PC-9 (cell line): ENCODE measurements at regions of chr7 and their contacts with region 1.

Region 1: DNA sequence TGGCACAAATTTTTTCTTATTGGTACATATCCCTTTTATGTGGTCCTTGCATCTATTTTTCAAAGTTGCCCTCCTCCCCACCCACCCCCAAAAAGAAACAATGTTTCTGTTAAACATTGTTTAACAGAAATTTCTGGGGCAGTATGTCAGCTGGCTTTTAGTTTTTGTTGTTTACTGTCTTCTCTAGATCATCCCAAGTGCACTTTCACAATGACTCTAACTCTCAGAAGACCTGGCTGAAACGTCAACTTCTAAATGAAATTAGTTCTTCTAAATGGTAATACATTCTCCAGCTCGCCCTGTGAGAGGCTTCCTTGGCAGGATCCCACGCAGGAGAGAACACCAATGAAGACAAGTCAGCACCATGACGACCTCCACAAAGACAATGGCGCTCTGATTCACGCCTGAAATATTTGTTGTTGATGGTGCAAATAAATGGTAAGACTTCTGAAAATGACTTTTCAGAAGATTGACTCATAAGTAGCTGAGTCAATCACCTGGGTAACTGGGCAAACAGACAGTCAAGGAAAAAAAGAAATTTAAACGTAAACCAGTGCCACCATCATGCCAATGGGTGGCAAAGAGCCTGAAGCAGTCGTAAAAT is 293.7 kb downstream of the FZD1 start:
- DNase-seq: peak; percentile 83 to 86
- H3K4me3 ChIP-seq: no peak overlapping the region
- H3K27ac ChIP-seq: peak overlapping the region; percentile 54
- H3K4me1 ChIP-seq: peaks cover 13% of the 10 kb centered on the region
- H3K27me3 ChIP-seq: no peaks in the 10 kb centered on the region
- CTCF ChIP-seq: no peak

Region 2: GRCh38 chr7:91068136-91069126 is 489.5 kb before region 1 on chr7:
- CTCF ChIA-PET with region 1: no interaction called
- POLR2A ChIA-PET with region 1: interaction called, 10 read pairs
- intact Hi-C with region 1: no loop called
- DNase-seq: peak in 1 of 2 experiments; percentile 14
- H3K4me3 ChIP-seq: no peak overlapping the region
- H3K27ac ChIP-seq: no peak overlapping the region
- H3K4me1 ChIP-seq: no peaks in the 10 kb centered on the region
- H3K27me3 ChIP-seq: no peaks in the 10 kb centered on the region
- CTCF ChIP-seq: no peak

Region 3: GRCh38 chr7:91264046-91264923 is 293.6 kb before region 1 on chr7 and contains the start of gene FZD1:
- CTCF ChIA-PET with region 1: no interaction called
- POLR2A ChIA-PET with region 1: interaction called, 9 read pairs
- intact Hi-C with region 1: loop called (anchors 1 kb)
- DNase-seq: peak; percentile 87 to 98
- H3K4me3 ChIP-seq: peak within 1 kb of the TSS; percentile 60
- H3K27ac ChIP-seq: no peak within 1 kb of the TSS
- H3K4me1 ChIP-seq: 0 out of 2 replicates have a peak, but pooled peaks cover 6% of the 10 kb centered on the region
- H3K27me3 ChIP-seq: peaks cover 17% of the 10 kb centered on the region; the same call in 1 of the 2 replicates
- CTCF ChIP-seq: no peak
- total RNA-seq, gene FZD1: 2.6 and 2.8 TPM in 2 replicates

Region 4: DNA sequence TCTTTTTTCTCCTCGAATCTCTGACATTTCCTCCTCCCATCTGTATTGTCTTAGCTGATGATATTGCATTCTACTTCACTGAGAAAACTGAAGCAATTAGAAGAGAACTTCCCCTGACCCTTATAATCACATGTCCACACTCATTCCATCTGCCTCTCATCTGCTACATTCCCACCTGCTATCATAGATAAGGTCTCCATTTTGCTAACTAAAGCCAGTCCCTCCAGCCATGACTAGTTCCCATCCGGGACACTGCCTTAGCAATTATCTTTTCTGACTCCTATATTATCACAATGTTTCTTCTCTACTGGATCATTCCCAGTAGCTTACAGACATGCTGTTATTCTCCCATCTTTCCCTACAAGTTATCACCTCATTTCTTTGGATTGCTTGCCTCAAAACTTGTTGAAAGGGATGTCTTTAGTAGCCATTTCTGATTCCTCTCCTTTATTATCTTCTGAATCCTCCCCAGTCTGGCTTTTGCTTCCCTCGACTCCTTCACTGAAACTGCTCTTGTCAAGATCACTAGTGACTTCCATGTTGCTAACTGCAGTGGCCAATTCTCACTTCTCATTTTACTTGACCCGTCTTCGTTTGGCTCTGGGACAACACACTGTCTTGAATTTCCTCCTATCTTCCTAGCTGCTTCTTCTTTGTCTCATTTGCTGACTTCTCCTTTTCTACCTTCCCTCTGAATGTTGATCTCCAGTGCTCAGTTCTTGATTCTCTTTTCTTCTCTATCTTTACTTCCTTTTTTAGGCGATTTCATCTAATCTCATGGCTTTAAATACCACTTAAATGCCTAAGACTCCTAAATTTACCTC is 257.7 kb before region 1 on chr7:
- CTCF ChIA-PET with region 1: no interaction called
- POLR2A ChIA-PET with region 1: no interaction called
- intact Hi-C with region 1: no loop called
- DNase-seq: no peak
- H3K4me3 ChIP-seq: no peak overlapping the region
- H3K27ac ChIP-seq: no peak overlapping the region
- H3K4me1 ChIP-seq: no peaks in the 10 kb centered on the region
- H3K27me3 ChIP-seq: no peaks in the 10 kb centered on the region
- CTCF ChIP-seq: no peak

Region 5: DNA sequence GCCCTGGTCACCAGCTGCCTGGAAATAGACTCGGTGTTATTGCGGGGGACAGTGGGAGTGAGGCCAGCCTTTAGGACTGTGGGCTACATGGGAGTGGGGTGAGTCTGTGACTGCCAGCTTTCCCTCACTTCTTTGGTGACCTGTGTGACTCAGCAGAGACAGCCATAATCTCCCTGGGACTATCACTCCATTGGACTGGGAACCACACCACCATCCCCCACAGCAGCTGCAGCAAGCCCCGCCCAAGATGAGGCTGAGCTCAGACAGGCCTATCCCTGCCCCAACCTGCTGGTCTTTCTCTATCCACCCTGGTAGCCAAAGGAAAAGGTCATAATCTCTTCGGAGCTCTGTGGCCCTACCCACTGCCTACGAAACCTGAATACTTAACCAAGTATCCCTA is 30.4 kb before region 1 on chr7:
- CTCF ChIA-PET with region 1: no interaction called
- POLR2A ChIA-PET with region 1: no interaction called
- intact Hi-C with region 1: no loop called
- DNase-seq: no peak
- H3K4me3 ChIP-seq: no peak overlapping the region
- H3K27ac ChIP-seq: no peak overlapping the region
- H3K4me1 ChIP-seq: no peaks in the 10 kb centered on the region
- H3K27me3 ChIP-seq: no peaks in the 10 kb centered on the region
- CTCF ChIP-seq: no peak

Region 6: GRCh38 chr7:91541641-91542040 is 16.2 kb before region 1 on chr7:
- CTCF ChIA-PET with region 1: no interaction called
- POLR2A ChIA-PET with region 1: interaction called, 14 read pairs
- intact Hi-C with region 1: no loop called
- DNase-seq: no peak
- H3K4me3 ChIP-seq: no peak overlapping the region
- H3K27ac ChIP-seq: no peak overlapping the region
- H3K4me1 ChIP-seq: no peaks in the 10 kb centered on the region
- H3K27me3 ChIP-seq: no peaks in the 10 kb centered on the region; the same call in 1 of the 2 replicates
- CTCF ChIP-seq: no peak

Region 7: GRCh38 chr7:91759215-91759871 is 201.5 kb after region 1 on chr7:
- CTCF ChIA-PET with region 1: no interaction called
- POLR2A ChIA-PET with region 1: no interaction called
- intact Hi-C with region 1: loop called (anchors 2 kb)
- DNase-seq: peak; percentile 88 to 92
- H3K4me3 ChIP-seq: no peak overlapping the region
- H3K27ac ChIP-seq: no peak overlapping the region
- H3K4me1 ChIP-seq: peaks cover 13% of the 10 kb centered on the region
- H3K27me3 ChIP-seq: no peaks in the 10 kb centered on the region
- CTCF ChIP-seq: no peak

Region 8: GRCh38 chr7:91852263-91852741 is 294.4 kb after region 1 on chr7:
- CTCF ChIA-PET with region 1: no interaction called
- POLR2A ChIA-PET with region 1: no interaction called
- intact Hi-C with region 1: loop called (anchors 5 kb)
- DNase-seq: peak in 1 of 2 experiments; percentile 41
- H3K4me3 ChIP-seq: no peak overlapping the region
- H3K27ac ChIP-seq: no peak overlapping the region
- H3K4me1 ChIP-seq: peaks cover 13% of the 10 kb centered on the region; the same call in 1 of the 2 replicates
- H3K27me3 ChIP-seq: no peaks in the 10 kb centered on the region
- CTCF ChIP-seq: peak; percentile 51

Region 9: DNA sequence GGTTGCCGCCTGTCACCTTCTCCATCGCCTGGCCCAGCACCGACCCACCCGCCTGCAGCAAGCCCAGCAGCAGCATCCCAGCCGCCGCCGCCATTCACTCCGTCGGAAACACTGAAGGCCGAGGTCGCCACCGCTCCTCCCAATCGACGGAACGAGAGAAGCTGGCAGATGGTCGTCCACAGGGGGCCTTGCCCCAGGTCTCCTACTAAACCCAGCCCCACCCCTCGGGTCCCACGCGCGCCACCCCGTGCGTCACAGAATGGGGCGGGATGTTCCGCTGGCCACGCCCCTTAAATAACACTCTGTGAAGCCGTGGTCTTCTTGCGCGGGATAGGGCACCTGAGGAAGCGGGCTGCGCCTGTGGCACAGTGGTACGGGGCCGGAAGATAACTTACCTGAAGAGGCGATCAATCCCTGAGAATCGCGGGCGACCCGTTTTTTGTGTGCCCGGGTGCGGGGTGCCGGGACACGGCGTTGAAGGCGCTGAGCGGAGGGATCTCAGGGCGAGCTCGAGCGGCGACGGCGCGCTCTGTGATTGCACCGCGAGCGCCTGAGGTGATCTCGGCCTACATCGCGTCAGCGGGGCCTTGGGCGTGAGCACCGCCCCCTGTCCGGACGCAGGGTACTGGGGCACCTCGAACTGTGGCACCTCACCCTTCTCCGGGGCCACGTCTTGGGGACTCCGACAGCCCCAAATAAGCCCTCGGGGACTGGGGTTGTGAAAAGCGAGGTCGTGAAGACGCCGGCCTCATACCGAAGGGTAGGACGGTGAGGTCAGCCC is 576.6 kb after region 1 on chr7 and contains the start of gene CYP51A1:
- CTCF ChIA-PET with region 1: no interaction called
- POLR2A ChIA-PET with region 1: no interaction called
- intact Hi-C with region 1: loop called (anchors 1 kb)
- DNase-seq: peak; percentile 80 to 95
- H3K4me3 ChIP-seq: peak within 1 kb of the TSS; percentile 65
- H3K27ac ChIP-seq: peak within 1 kb of the TSS; percentile 73
- H3K4me1 ChIP-seq: peaks cover 20% of the 10 kb centered on the region
- H3K27me3 ChIP-seq: no peaks in the 10 kb centered on the region
- CTCF ChIP-seq: no peak
- total RNA-seq, gene CYP51A1: 58.9 and 89.0 TPM in 2 replicates